Activated CD8-positive, alpha-beta T cell treated with anti-CD3 and anti-CD28 coated beads, Interleukin-2, amount 10 ng/mL, durations not matched to agents 7 days and 5 days (primary cell): ENCODE measurements at regions of chr18 and their contacts with region 1.

Region 1: GRCh38 chr18:26215247-26215970 is 10.8 kb upstream of the TAF4B start:
- DNase-seq: peak; percentile 55
- ATAC-seq: peak; percentile 98
- H3K4me3 Mint-ChIP-seq: peak overlapping the region; percentile 70
- H3K27ac Mint-ChIP-seq: peak overlapping the region; percentile 95
- H3K4me1 Mint-ChIP-seq: peaks cover 23% of the 10 kb centered on the region
- H3K27me3 Mint-ChIP-seq: no peaks in the 10 kb centered on the region

Region 2: GRCh38 chr18:25883091-25883490 is 332.3 kb before region 1 on chr18:
- CTCF ChIA-PET with region 1: no interaction called
- POLR2A ChIA-PET with region 1: no interaction called
- DNase-seq: no peak
- ATAC-seq: no peak
- H3K4me3 Mint-ChIP-seq: no peak overlapping the region
- H3K27ac Mint-ChIP-seq: no peak overlapping the region
- H3K4me1 Mint-ChIP-seq: no peaks in the 10 kb centered on the region
- H3K27me3 Mint-ChIP-seq: peaks cover 5% of the 10 kb centered on the region

Region 3: GRCh38 chr18:26226229-26227005 is 11.0 kb after region 1 on chr18 and contains the start of gene TAF4B:
- CTCF ChIA-PET with region 1: interaction called, 3 read pairs
- POLR2A ChIA-PET with region 1: interaction called, 12 read pairs
- DNase-seq: peak; percentile 92
- ATAC-seq: peak; percentile 90
- H3K4me3 Mint-ChIP-seq: peak within 1 kb of the TSS; percentile 95
- H3K27ac Mint-ChIP-seq: peak within 1 kb of the TSS; percentile 98
- H3K4me1 Mint-ChIP-seq: peaks cover 35% of the 10 kb centered on the region
- H3K27me3 Mint-ChIP-seq: peaks cover 8% of the 10 kb centered on the region
- total RNA-seq, gene TAF4B: 8.1 to 8.5 TPM